Activated T-helper 2 cell treated with anti-CD3 and anti-CD28 coated beads, Interferon-gamma antibody, Interleukin-2, Interleukin-4, amounts not matched to agents 10 μg/mL and 5 μg/mL and 100 μg/mL, durations not matched to agents 14 hours and 24 hours and 36 hours (primary cell): ENCODE measurements at regions of chr4 and their contacts with region 1.

Region 1: DNA sequence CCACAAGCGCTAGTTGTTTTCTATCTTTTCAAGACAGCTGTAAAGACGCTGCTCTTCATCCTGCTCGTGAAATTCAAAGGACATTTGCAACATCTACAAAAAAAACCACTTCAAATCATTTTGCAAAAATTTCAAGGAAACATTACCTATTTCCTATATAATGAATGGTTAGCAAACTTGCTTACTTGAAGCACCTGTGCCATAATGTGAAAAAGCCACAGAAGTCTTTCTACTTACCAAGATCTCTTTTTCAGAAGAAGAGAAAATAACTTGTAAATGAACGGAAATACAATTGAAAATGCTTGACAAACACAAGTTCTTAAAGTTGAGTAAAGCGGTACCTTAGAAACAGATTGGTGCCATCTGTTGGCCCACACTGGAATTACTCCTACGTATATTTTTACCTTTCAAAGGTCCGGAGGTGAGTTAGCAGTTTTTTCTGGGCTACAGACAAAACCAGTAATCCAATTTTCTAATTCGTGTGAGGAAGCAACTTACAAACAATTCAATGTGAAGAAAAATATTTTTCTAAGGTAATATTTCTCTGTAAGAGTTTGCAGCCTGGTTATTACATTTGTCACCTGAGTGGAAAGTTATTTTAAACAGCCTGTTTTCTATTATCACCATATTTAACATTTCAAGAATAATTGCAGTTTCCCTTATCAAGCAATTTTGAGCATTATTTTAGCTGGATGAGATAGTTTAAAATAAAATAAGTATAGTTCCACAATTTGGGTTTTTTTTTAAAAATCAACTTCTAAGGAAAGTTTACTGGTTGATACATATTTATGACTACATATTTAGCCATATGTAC is at the start of gene TLR6:
- DNase-seq: peak; percentile 47
- H3K4me3 Mint-ChIP-seq: peak within 1 kb of the TSS; percentile 73
- H3K27ac Mint-ChIP-seq: peak within 1 kb of the TSS; percentile 78
- H3K4me1 Mint-ChIP-seq: peaks cover 26% of the 10 kb centered on the region
- H3K27me3 Mint-ChIP-seq: peaks cover 5% of the 10 kb centered on the region
- total RNA-seq, gene TLR6: 0.37 and 0.48 TPM in 2 replicates

Region 2: DNA sequence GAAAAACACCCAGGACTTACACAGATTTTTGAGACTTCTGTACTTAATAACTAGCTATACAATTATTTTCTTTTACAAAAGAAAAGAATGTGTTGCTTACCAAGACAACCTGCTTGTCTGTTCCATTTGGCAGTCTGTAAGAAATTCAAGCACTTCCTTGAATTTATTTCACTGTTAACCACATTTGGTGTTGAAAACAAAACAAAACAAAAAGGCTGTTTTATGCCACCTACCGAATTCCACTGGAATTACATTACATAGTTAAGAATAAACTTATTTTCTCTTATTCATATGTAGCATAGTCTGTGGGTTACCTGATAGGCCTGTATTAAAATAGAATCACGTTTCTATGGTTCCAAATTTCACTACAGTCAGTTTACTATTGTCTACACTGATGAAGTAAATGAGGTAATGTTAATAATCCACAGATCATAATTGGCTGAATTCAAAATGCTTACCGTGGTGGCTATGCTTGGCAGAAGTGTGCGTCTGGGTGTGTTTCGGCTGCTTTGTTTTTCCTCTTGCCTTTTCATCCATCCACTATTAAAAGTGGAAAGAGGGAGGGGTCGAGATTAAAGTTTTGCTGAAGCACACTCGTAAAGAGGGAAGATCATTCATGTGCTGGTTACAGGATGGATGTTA is 52.0 kb before region 1 on chr4 and contains the start of gene TLR1:
- intact Hi-C with region 1: loop called (anchors 2 kb)
- DNase-seq: no peak
- H3K4me3 Mint-ChIP-seq: peak within 1 kb of the TSS; percentile 80
- H3K27ac Mint-ChIP-seq: peak within 1 kb of the TSS; percentile 92
- H3K4me1 Mint-ChIP-seq: peaks cover 20% of the 10 kb centered on the region
- H3K27me3 Mint-ChIP-seq: peaks cover 2% of the 10 kb centered on the region
- total RNA-seq, gene TLR1: 0.34 and 0.67 TPM in 2 replicates

Region 3: DNA sequence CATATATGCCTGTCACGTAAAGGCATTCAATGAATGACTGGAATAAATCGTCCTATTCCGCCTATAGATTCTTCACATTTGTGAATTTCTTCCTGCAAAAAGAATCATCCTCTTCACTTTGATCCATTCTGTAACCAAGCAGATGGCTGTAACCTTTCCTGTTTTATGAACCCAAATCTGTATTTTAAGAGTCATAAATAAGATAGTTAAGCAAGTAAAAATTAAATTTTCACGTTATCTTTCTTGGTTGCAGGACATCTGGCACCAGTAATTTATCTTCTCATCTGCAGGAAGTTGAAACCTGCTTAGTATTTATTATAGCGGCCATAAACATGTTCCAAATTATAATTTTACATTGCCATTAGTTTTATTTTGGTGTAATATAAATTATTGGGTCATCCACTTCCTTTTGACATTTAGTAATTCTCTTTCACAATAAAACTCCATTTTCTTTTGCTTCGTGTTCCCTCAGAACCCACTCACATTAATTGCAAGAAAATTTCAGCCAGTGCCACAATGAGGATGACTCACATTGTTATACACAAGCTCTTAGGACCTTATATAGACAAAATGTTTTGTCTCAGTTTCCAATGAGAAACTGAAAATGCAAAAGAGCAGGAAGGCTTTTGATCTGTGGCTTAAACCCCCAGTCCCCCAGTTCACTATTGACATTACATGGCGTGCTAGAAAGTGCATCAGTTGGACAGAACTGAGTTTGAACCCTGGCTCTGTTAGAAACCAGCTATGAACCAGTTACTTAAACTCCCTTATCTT is 124.4 kb after region 1 on chr4:
- intact Hi-C with region 1: no loop called
- DNase-seq: no peak
- H3K4me3 Mint-ChIP-seq: peak overlapping the region; percentile 31
- H3K27ac Mint-ChIP-seq: peak overlapping the region; percentile 81
- H3K4me1 Mint-ChIP-seq: peaks cover 53% of the 10 kb centered on the region
- H3K27me3 Mint-ChIP-seq: no peaks in the 10 kb centered on the region

Region 4: DNA sequence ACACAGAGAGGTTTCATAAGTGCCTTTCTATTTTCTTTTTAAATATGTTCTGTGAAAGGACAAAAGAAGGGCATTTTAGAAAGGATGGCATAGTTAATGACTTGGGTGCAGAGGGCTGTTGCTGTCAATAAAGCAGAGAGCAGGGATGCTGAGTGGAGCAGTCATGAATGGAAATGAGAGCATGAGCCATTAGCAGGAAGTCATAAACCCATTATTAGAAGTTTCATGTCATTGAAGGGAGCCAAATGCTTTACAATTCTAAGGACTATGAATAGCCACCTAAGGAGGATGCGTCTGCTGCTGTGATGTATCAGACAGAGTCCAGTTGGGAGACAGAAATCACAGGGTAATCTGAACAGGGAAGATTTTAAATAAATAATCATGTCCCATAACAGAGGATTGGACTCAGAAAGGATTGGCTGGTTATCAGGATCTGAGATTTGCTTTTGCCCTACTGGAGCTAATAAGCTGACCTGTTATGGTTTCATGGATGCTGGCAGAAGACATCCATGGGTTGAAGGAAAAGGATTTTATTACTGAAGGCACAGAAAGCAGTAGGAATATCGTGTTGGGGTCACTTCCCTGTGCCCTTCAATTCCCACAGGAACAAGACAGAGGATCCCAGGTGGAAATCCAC is 278.1 kb after region 1 on chr4:
- intact Hi-C with region 1: loop called (anchors 1 kb)
- DNase-seq: no peak
- H3K4me3 Mint-ChIP-seq: no peak overlapping the region
- H3K27ac Mint-ChIP-seq: no peak overlapping the region
- H3K4me1 Mint-ChIP-seq: peaks cover 5% of the 10 kb centered on the region
- H3K27me3 Mint-ChIP-seq: no peaks in the 10 kb centered on the region